ENCODE measurements at regions of chrX and their contacts with region 1.

Region 1: DNA sequence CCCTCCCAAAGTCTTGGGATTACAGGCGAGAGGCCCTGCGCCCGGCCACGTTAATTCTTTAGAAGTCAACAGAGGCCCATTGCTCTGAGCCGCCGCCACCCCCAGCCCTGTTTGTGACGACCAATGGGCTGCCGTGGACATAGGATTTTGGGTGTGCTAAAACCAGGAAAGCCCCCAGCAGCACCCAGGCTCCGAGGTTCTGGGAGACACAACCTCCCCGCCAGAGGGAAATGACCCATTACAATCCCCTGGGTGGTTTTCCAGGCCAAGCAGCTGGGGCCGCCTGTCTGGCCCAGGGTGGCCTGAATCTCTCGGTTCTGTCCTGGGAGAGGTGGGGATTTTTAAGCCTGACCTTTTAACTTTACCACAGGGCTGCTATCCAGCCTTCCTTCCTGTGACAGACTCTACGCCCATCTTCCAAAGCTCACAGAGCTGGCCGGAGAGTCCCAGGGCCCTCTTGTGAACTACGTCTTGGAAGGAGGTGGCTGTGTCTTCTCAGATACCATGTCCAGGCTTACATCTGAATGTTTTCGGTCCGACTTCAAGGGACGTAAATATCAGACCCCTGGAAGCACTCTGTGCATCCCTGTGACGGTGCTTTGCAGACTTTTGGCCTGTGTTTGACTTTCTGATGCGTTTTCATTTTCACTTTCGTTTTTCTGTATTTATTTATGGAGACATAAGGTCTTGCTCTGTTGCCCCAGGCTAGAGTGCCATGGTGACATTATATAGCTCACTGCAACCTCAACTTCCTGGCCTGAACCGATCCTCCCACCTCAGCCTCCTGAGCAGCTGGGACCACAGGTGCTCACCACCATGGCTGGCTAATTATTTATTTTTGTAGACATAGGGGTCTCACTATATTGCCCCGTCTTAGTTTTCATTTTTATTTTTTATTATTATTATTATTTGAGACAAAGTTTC is 36.0 kb downstream of the P2RY8 start:
- DNase-seq: peak; percentile 30
- H3K4me3 Mint-ChIP-seq: peak overlapping the region; percentile 10
- H3K27ac Mint-ChIP-seq: peak overlapping the region; percentile 79
- H3K4me1 Mint-ChIP-seq: peaks cover 28% of the 10 kb centered on the region
- H3K27me3 Mint-ChIP-seq: no peaks in the 10 kb centered on the region

Region 2: DNA sequence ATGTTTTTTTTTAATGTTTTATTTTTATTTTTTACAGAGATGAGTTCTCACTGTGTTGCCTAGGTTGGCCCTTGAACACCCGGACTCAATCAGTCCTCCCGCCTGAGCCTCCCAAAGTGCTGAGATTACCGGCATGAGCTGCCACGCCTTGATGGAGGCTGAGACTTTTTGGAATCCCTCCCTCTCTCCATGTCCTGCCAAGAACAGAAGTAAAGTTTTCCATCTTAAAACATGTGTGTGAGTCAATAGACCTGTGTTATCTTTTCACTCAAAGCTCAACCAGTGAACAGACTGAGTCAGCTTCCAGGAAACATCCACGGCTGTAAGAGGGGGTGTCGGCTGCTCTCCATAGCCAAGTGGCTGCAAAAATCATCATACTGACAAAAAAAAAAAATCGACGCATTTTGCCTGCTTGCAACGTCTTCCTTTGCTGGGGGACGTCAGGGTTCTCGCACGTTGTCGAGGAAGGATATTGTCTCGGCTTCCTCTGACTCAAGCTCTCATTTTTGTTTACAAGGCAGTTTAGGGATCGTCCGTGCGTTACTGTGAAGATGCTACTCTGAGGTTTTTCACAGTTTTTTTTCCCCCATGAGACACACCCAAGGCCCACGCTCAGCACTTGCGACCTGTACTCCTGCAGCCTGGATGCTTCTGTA is 38.2 kb before region 1 on chrX:
- intact Hi-C with region 1: loop called (anchors 2 kb)
- DNase-seq: peak; percentile 79
- H3K4me3 Mint-ChIP-seq: peak overlapping the region; percentile 77
- H3K27ac Mint-ChIP-seq: peak overlapping the region; percentile 90
- H3K4me1 Mint-ChIP-seq: peaks cover 58% of the 10 kb centered on the region
- H3K27me3 Mint-ChIP-seq: no peaks in the 10 kb centered on the region

Measured in activated T-helper 1 cell treated with anti-CD3 and anti-CD28 coated beads, Interleukin-12 subunit alpha, Interleukin-12 subunit beta, Interleukin-2, Interleukin-4 antibody, amounts not matched to agents 30 ng/mL and 10 ng/mL and 1 ng/mL, durations not matched to agents 14 hours and 24 hours and 36 hours (primary cell).